CD4-positive, alpha-beta T cell (primary cell): ENCODE measurements at regions of chr10 and their contacts with region 1.

Region 1: DNA sequence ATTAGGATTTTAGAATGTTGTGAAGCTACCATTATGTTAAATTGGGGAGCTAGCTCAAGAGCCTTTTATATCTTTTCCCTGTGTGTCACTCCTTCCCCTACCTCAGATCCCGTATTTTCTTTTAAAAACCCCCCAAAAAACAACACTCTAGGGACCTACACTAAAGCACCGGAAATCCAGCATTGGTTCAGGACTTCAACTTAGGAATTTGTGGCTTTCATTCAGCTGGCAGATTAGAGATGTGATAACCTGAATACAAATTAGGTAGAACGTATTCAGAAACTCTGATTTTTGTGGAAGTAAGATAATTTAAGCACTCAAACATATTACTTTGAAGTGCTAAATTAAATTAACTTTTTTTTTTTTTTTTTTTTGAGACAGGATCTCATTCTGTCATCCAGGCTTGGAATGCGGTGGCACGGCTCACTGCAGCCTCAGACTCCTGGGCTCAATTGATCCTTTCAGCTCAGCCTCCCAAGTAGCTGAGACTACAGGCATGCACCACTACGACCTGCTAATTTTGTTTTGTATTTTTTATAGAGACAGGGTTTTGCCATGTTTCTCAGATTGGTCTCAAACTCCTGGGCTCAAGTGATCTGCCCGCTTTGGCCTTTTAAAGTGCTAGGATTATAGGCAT is 6.8 kb downstream of the TBC1D12 start:
- DNase-seq: no peak
- ATAC-seq: no peak
- H3K4me3 ChIP-seq: no peak overlapping the region
- H3K4me3 Mint-ChIP-seq: no peak overlapping the region
- H3K27ac ChIP-seq: no peak overlapping the region
- H3K27ac Mint-ChIP-seq: no peak overlapping the region
- H3K4me1 ChIP-seq: no peaks in the 10 kb centered on the region
- H3K4me1 Mint-ChIP-seq: no peaks in the 10 kb centered on the region
- H3K27me3 ChIP-seq: peaks cover 23 to 66% of the 10 kb centered on the region in 2 experiments
- H3K27me3 Mint-ChIP-seq: peaks cover 88% of the 10 kb centered on the region
- CTCF ChIP-seq: no peak

Region 2: DNA sequence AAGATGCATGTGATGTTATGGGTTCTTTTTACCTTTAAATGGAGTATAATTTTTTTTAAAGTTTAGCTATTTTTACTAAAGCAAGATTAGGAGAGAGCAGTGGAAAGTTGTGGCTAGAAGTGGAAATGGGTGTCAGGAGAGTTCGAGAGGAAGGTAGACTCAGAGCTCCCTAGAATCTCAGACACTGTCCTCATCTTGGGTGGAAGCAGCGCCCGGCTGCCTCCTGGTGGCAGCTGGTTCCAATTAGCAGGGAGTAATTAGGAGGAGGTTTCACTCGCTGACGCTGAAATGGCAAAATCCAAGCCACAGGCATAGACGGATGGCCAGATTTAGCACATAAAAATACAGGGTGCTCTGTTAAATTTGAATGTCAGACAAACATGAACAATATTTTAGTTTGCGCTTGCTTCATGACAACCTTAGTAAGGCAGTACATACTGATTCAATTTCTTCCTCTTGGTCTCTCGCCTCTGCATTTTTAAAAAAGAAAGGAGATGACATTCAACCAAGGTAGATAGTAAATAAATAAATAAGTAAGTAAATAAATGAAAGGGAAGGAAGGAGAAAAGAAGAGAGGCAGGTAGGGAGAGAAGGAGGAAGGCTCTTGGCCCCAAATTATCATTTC is 592.9 kb before region 1 on chr10:
- CTCF ChIA-PET with region 1: no interaction called
- POLR2A ChIA-PET with region 1: no interaction called
- intact Hi-C with region 1: no loop called
- DNase-seq: peak in 10 of 14 experiments; percentile 3 to 48 (median 16)
- ATAC-seq: no peak
- H3K4me3 ChIP-seq: no peak overlapping the region
- H3K4me3 Mint-ChIP-seq: no peak overlapping the region
- H3K27ac ChIP-seq: no peak overlapping the region
- H3K27ac Mint-ChIP-seq: no peak overlapping the region
- H3K4me1 ChIP-seq: no peaks in the 10 kb centered on the region
- H3K4me1 Mint-ChIP-seq: no peaks in the 10 kb centered on the region
- H3K27me3 ChIP-seq: peaks cover 13 to 22% of the 10 kb centered on the region in 2 experiments
- H3K27me3 Mint-ChIP-seq: peaks cover 54% of the 10 kb centered on the region
- CTCF ChIP-seq: peak; percentile 37

Region 3: GRCh38 chr10:94673614-94674321 is 264.6 kb after region 1 on chr10:
- CTCF ChIA-PET with region 1: no interaction called
- POLR2A ChIA-PET with region 1: no interaction called
- intact Hi-C with region 1: no loop called
- DNase-seq: no peak
- ATAC-seq: no peak
- H3K4me3 ChIP-seq: no peak overlapping the region
- H3K4me3 Mint-ChIP-seq: no peak overlapping the region
- H3K27ac ChIP-seq: no peak overlapping the region
- H3K27ac Mint-ChIP-seq: no peak overlapping the region
- H3K4me1 ChIP-seq: no peaks in the 10 kb centered on the region
- H3K4me1 Mint-ChIP-seq: no peaks in the 10 kb centered on the region
- H3K27me3 ChIP-seq: no peaks in the 10 kb centered on the region
- H3K27me3 Mint-ChIP-seq: peaks cover 12% of the 10 kb centered on the region
- CTCF ChIP-seq: no peak

Region 4: DNA sequence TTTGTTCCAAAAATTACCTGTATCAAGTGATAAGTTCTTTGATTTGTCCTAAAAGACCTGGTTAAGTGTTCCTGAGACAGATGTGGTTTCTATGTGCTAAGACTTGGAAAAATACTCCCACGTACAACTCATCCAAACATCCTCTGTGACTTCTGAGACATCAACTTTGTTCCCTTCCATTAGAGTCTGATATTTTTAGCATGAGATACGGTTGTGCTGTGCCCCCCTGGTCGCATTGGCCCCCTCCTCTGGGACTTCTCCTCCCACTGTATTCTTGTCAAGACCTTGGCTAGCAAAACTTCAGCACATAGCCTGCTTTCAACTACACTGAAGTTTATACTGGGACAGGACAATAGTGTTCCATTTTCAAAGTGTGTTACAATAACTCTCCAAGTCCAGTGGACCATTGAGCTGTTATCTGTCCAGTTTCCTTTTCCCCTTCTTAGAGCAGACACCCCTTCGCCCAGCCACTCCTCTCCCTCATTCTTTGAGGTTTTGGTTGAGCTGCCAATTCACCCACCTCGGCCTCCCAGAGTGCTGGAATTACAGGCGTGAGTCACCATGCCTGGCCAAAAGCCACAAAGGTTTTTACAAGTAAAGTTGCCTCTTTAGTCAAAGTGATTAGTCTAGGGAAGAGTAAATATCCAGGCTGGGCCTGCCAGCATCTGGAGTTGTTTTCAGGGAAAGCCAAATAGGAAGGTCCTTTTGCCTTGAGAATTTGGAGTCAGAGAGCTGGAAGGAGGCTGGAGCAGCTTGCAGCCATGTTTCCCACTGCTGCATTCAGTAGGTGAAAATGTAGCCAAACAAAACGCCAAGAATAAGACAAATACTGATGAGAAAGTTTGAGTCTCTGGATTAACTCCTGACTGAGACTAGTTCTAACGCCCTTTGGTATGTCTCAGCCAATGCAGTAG is 899.5 kb after region 1 on chr10:
- CTCF ChIA-PET with region 1: no interaction called
- POLR2A ChIA-PET with region 1: no interaction called
- intact Hi-C with region 1: loop called in 1 of 2 experiments (anchors 5 kb)
- DNase-seq: no peak
- ATAC-seq: no peak
- H3K4me3 ChIP-seq: no peak overlapping the region
- H3K4me3 Mint-ChIP-seq: no peak overlapping the region
- H3K27ac ChIP-seq: no peak overlapping the region
- H3K27ac Mint-ChIP-seq: no peak overlapping the region
- H3K4me1 ChIP-seq: no peaks in the 10 kb centered on the region
- H3K4me1 Mint-ChIP-seq: no peaks in the 10 kb centered on the region
- H3K27me3 ChIP-seq: no peaks in the 10 kb centered on the region
- H3K27me3 Mint-ChIP-seq: peaks cover 4% of the 10 kb centered on the region
- CTCF ChIP-seq: no peak